ENCODE measurements at regions of chr6 and their contacts with region 1.

Region 1: GRCh38 chr6:132798869-132799538 is 567 bp upstream of the SLC18B1 start:
- DNase-seq: no peak
- H3K4me3 ChIP-seq: peak overlapping the region; percentile 79
- H3K27ac ChIP-seq: no peak overlapping the region
- H3K27me3 ChIP-seq: peaks cover 2% of the 10 kb centered on the region
- CTCF ChIP-seq: peak; percentile 83

Region 2: DNA sequence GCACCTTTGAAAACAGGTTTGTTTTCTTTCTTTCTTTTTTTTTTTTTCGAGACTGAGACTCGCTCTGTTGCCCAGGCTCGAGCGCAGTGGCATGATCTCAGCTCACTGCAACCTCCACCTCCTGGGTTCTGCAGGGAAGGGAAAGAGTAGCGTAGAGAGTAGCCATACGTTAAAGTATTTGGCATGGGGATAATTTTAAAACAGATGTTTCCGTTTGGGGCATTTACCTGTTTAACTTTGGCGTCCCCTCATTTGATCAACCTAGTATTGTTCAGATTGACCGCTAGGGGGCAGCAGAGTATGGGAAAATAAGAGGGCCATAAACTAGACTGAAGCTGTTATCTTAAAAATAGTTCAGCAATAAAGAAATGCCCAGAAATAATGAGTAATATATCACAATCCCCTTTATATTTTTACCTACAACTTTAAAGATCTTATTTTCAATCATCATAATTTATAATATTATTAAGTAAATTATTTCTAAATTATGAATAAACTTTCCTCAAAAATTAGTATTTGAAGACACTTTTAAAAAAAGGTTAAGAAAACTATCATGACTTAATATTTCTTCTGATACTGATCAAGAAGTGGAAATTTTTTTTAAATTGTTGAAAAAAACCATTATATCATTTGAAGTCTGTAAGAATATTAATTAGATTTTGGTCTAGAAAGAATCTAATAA is 268.6 kb before region 1 on chr6:
- CTCF ChIA-PET with region 1: interaction called, 17 read pairs
- POLR2A ChIA-PET with region 1: no interaction called
- DNase-seq: peak; percentile 29
- H3K4me3 ChIP-seq: no peak overlapping the region
- H3K27ac ChIP-seq: no peak overlapping the region
- H3K27me3 ChIP-seq: peaks cover 7% of the 10 kb centered on the region
- CTCF ChIP-seq: peak; percentile 76

Region 3: DNA sequence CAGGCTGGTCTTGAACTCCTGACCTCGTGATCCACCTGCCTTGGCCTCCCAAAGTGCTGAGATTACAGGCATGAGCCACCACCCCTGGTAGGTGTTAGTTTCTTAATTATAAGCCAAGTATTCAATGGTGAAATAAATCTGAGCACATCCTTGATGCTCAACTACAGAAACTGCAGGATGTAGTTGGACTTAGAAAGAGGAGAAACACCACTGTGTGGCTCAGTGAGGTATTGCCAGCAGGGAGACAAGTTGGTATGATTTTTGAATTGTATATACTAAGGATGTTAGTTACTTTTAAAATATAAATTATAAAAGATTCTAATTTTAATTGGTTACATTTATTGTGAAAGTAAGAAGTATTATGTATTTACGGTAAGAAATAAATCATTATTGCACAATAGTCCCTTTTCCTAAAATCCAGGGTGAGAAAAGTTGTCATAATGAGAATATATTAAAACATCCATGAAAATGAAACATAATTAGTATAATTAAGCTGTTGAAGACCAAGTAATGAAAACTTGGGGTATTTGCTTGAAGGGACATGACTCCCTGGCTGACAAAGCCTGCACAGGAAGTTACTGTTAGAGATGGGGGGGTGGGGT is 18.1 kb before region 1 on chr6:
- CTCF ChIA-PET with region 1: interaction called, 14 read pairs
- POLR2A ChIA-PET with region 1: no interaction called
- DNase-seq: no peak
- H3K4me3 ChIP-seq: no peak overlapping the region
- H3K27ac ChIP-seq: no peak overlapping the region
- H3K27me3 ChIP-seq: no peaks in the 10 kb centered on the region
- CTCF ChIP-seq: peak; percentile 73

Region 4: GRCh38 chr6:132788658-132789395 is 10.2 kb before region 1 on chr6:
- CTCF ChIA-PET with region 1: interaction called, 14 read pairs
- POLR2A ChIA-PET with region 1: no interaction called
- DNase-seq: no peak
- H3K4me3 ChIP-seq: no peak overlapping the region
- H3K27ac ChIP-seq: no peak overlapping the region
- H3K27me3 ChIP-seq: no peaks in the 10 kb centered on the region
- CTCF ChIP-seq: no peak

Region 5: DNA sequence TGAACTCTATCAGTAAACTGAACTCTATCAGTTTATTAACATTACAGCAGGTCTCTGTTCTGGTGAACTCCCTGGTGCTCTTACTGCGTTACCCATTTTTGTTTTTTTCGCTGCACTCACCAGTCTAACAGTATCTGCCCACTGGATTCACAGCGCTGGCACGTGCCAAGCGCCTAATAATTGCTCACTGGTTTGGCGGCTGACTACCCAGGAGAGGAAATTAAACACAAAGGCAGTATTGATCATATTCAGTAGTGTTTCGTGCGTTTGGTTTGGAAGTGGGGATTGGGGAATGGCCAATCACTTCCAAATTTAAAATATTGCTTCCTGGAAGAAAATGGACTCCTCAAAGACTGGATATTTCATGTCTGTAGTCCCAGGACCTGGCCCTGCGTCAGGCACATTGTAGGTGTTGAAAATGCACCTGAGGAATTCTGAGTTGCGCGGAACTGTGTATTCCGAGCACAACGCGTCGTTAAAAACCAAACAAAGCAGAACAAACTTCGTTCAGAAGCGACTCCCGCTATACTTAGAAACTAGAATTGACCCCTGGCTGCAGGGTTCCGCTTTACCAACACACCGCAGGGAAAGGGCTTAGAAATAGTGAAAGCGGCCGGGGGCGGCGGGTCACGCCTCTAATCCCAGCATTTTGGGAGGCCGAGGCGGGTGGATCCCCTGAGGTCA is 14.3 kb after region 1 on chr6:
- CTCF ChIA-PET with region 1: interaction called, 15 read pairs
- POLR2A ChIA-PET with region 1: interaction called, 15 read pairs
- DNase-seq: no peak
- H3K4me3 ChIP-seq: peak overlapping the region; percentile 87
- H3K27ac ChIP-seq: peak overlapping the region; percentile 65
- H3K27me3 ChIP-seq: peaks cover 3% of the 10 kb centered on the region
- CTCF ChIP-seq: no peak